ENCODE measurements at regions of chr18 and their contacts with region 1.

Region 1: DNA sequence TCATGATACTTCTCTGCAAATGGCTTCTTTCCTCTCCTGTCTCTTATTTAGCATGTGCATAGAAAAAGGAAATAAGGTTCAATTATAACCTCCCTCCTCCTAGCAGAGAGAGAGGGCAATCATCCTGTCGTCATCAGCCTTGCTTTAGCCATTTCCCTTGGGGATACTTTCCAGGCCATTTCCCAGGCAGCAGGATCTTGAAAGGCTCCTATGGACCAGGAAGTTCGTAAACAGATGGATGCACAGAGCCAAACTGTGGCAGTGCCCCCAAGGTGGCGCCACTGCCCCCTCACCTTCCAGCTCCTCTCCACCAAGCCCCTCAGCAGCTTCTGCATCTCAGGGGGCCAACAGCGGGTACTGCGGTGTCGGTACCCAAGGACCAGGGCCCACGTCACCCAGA is 157.4 kb downstream of the DTNA start:
- DNase-seq: peak; percentile 38
- ATAC-seq: no peak
- H3K4me3 Mint-ChIP-seq: no peak overlapping the region
- H3K27ac Mint-ChIP-seq: peak overlapping the region; percentile 42
- H3K4me1 Mint-ChIP-seq: peaks cover 46% of the 10 kb centered on the region
- H3K27me3 Mint-ChIP-seq: peaks cover 3% of the 10 kb centered on the region
- CTCF ChIP-seq: no peak

Region 2: GRCh38 chr18:34676816-34677574 is 190.5 kb before region 1 on chr18:
- CTCF ChIA-PET with region 1: no interaction called
- POLR2A ChIA-PET with region 1: no interaction called
- intact Hi-C with region 1: no loop called
- DNase-seq: no peak
- ATAC-seq: no peak
- H3K4me3 Mint-ChIP-seq: no peak overlapping the region
- H3K27ac Mint-ChIP-seq: no peak overlapping the region
- H3K4me1 Mint-ChIP-seq: no peaks in the 10 kb centered on the region
- H3K27me3 Mint-ChIP-seq: no peaks in the 10 kb centered on the region
- CTCF ChIP-seq: no peak

Region 3: GRCh38 chr18:34809451-34810072 is 58.0 kb before region 1 on chr18:
- CTCF ChIA-PET with region 1: no interaction called
- POLR2A ChIA-PET with region 1: no interaction called
- intact Hi-C with region 1: no loop called
- DNase-seq: peak; percentile 29
- ATAC-seq: no peak
- H3K4me3 Mint-ChIP-seq: no peak overlapping the region
- H3K27ac Mint-ChIP-seq: no peak overlapping the region
- H3K4me1 Mint-ChIP-seq: peaks cover 7% of the 10 kb centered on the region
- H3K27me3 Mint-ChIP-seq: peaks cover 2% of the 10 kb centered on the region
- CTCF ChIP-seq: no peak

Region 4: DNA sequence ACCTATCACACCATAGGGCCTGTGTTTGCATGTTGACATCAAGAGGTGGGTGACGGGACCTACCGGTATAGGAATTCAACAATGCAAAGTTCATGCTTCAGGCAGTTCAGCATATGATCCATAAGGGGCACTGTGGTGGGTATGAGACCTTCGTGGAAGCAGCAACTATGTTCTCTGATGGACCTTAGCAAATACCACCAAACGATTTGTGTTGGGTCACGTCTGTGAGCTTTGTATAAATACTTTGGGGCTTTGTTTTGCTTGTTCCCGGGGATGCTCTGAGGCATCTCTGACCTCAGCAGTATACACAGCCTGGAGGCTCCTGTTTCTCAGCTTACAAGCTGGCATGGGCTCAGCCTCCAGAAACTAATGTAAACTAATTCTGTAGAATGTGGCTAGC is 45.8 kb before region 1 on chr18:
- CTCF ChIA-PET with region 1: no interaction called
- POLR2A ChIA-PET with region 1: no interaction called
- intact Hi-C with region 1: no loop called
- DNase-seq: no peak
- ATAC-seq: no peak
- H3K4me3 Mint-ChIP-seq: no peak overlapping the region
- H3K27ac Mint-ChIP-seq: no peak overlapping the region
- H3K4me1 Mint-ChIP-seq: no peaks in the 10 kb centered on the region
- H3K27me3 Mint-ChIP-seq: peaks cover 6% of the 10 kb centered on the region
- CTCF ChIP-seq: no peak

Region 5: DNA sequence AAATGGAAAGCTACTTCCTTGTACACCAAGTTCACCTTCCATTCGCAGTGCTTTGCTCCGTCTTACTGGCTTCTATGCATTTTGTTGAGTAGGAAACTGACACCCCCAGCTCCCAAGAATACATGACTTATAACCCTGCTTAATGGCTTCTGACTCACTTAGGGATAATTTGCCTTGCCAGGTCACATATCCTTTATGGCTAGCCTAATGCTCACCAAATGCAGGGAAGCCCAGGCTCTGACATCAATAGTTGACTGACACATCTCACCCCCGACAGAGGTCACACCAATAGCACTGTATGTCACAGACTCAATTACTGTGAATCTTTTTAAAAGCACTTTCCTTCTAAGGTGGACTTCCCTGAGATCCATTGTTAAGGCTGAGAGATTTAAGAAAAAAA is 10.2 kb before region 1 on chr18:
- CTCF ChIA-PET with region 1: interaction called, 11 read pairs
- POLR2A ChIA-PET with region 1: no interaction called
- intact Hi-C with region 1: no loop called
- DNase-seq: no peak
- ATAC-seq: no peak
- H3K4me3 Mint-ChIP-seq: no peak overlapping the region
- H3K27ac Mint-ChIP-seq: no peak overlapping the region
- H3K4me1 Mint-ChIP-seq: peaks cover 19% of the 10 kb centered on the region
- H3K27me3 Mint-ChIP-seq: no peaks in the 10 kb centered on the region
- CTCF ChIP-seq: no peak

Region 6: DNA sequence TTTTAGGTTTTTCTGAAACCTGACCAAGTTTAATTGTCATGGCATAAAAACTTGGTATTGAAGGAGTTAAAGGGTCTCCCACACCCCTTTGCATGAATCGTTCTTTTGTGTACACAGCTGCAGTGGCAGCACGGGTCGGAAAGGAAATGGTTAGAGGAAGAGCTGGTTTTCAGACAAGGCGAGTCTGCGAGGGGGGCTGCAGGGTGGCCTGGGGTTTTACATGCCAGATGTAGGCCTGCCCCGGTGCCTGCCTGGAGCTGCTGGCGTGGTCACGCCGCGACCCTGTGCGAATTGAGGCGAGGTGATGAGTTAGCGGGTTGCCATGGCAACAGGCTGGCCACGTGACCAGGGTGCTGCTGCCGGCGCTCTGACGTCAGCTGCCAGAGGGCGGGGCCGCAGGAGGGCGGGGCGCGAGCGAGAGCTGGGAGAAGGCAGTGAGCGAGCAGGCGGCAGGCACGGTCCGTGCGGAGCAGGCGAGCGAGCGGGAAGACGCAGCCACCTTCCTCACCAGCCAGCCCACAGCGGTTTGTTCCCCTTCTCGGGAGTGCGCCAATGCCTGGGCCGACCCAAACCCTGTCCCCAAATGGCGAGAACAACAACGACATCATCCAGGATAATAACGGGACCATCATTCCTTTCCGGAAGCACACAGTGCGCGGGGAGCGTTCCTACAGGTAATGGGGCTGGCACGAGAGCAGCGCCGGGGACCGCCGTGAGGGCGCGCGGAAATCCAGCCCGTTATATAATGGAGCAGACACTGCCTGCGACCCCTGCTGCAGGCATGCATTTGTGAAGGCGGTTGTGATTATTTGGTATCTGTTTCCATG is 173.7 kb after region 1 on chr18 and contains the start of gene MAPRE2:
- CTCF ChIA-PET with region 1: no interaction called
- POLR2A ChIA-PET with region 1: no interaction called
- intact Hi-C with region 1: loop called (anchors 10 kb)
- DNase-seq: peak; percentile 100
- ATAC-seq: peak; percentile 79
- H3K4me3 Mint-ChIP-seq: peak within 1 kb of the TSS; percentile 85
- H3K27ac Mint-ChIP-seq: peak within 1 kb of the TSS; percentile 98
- H3K4me1 Mint-ChIP-seq: peaks cover 54% of the 10 kb centered on the region
- H3K27me3 Mint-ChIP-seq: no peaks in the 10 kb centered on the region
- CTCF ChIP-seq: peak; percentile 22
- total RNA-seq, gene MAPRE2: 70.7 to 72.7 TPM